Right ventricle myocardium inferior (tissue), 1 donor: ENCODE measurements at regions of chr15 and their contacts with region 1.

Region 1: GRCh38 chr15:25641762-25642161 is 202.9 kb upstream of the UBE3A start:
- DNase-seq: no peak
- ATAC-seq: no peak

Region 2: DNA sequence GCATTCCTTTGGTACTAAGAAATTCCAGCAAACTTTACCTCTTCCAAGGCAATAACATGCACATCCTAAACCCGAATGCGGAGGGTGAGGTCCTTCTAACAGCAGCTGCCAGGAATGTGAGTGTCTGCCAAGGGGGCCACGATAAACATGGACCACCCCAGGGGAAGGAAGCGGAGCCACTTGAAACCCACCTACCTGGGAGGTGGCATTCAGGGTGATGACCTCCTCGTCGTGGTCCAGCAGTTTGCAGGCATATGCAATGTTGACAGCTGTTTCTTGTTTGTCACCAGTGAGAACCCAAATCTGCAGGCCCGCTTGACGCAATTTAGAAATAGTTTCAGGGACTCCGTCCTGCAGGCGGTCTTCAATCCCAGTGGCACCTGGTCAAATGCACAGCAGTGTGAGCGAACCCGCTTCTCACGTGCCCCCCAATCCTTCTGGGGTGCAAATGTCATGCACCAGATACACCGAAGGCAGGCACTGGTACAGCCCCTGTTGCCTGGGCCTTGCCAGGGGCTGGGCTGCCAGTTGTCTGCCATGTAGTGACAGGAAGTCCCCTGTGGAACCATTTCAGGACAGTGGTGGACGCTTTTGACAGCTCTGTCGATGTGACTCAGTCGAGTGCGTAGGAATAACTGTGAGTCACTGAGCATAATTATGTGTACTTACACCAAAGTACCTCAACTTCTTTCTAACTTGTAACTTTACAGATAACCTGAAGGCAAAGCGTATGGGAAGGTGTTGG is 60.1 kb after region 1 on chr15:
- intact Hi-C with region 1: loop called (anchors 10 kb)
- DNase-seq: no peak
- ATAC-seq: no peak

Region 3: GRCh38 chr15:25875566-25875965 is 233.8 kb after region 1 on chr15:
- intact Hi-C with region 1: no loop called
- DNase-seq: no peak
- ATAC-seq: no peak